ENCODE measurements at regions of chr10 and their contacts with region 1.

Region 1: DNA sequence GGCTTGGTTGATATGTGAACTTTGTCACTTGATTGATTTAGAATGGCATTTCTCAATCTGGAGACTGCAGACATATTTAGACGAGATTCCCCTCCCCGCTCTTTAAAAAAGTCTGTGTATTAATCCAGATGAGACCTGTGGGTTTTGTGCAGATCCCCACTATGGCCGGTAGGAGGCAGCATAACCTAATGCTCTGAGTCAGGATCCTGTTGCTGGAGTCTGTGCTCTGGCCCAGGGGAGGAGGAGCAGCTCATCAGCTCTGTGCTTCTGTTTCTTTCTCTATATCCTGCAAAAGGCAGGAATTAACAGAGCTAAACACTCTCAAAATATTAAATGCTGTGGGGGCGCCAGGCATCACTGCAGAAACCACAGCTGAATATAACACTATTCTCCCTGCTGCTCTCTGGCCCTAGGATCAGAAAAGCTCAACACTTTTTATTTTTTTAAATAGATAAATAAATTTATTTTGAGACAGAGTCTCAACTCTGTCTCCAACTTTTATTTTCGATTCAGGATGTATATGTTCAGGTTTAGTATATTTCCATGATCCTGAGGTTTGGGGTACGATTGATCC is 23.9 kb upstream of the SEPHS1 start:
- DNase-seq: peak; percentile 78
- H3K4me3 Mint-ChIP-seq: no peak overlapping the region
- H3K27ac Mint-ChIP-seq: no peak overlapping the region
- H3K4me1 Mint-ChIP-seq: no peaks in the 10 kb centered on the region
- H3K27me3 Mint-ChIP-seq: no peaks in the 10 kb centered on the region

Region 2: GRCh38 chr10:13382703-13383398 is 10.9 kb after region 1 on chr10:
- CTCF ChIA-PET with region 1: interaction called, 23 read pairs
- POLR2A ChIA-PET with region 1: no interaction called
- intact Hi-C with region 1: no loop called
- DNase-seq: no peak
- H3K4me3 Mint-ChIP-seq: peak overlapping the region; percentile 13
- H3K27ac Mint-ChIP-seq: no peak overlapping the region
- H3K4me1 Mint-ChIP-seq: peaks cover 11% of the 10 kb centered on the region
- H3K27me3 Mint-ChIP-seq: peaks cover 39% of the 10 kb centered on the region

Region 3: DNA sequence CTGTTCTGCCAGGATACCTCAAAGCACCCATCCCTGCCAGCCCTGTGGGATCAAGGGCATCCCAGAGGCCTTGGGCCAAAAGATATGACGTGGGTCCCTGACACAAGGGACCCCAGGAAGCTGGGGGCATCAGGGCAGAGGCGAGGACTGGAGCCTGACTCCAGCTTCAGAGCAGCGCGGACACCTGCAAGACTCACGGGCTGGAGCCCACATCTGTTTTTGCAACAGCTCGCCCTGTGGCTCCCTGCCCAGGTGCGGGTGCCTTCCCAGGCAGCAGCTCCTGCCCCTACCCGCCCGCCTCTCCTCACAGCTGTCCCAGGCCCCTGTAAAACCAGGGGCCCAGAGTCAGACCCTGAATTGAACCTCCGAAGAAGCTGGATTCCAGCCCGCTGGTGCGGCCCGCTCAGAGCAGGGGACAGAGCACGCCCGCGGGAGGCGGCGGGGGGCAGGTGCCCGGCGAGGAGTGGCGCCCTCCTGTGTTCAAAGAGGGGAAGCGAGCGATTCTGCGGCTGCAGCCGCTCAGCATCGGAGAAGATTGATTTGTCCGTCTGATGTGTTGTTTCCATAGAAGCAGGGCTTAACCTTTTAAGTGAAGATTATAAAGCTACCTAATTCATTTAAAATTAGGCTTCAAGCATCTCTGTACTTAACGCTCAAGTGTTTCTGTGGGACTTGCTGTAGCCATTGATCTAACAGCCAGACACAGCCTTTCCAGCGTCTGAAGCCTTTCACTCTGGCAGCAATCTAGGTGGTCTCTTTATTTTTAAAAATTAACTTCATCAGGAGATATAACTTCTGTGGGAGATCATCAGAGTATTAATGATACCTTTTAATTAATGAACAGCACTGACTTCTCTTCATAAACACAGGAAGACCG is 68.4 kb after region 1 on chr10:
- CTCF ChIA-PET with region 1: interaction called, 114 read pairs
- POLR2A ChIA-PET with region 1: no interaction called
- intact Hi-C with region 1: loop called (anchors 1 kb)
- DNase-seq: peak; percentile 76
- H3K4me3 Mint-ChIP-seq: peak overlapping the region; percentile 38
- H3K27ac Mint-ChIP-seq: no peak overlapping the region
- H3K4me1 Mint-ChIP-seq: peaks cover 9% of the 10 kb centered on the region
- H3K27me3 Mint-ChIP-seq: peaks cover 37% of the 10 kb centered on the region

Region 4: GRCh38 chr10:13536674-13537366 is 164.8 kb after region 1 on chr10:
- CTCF ChIA-PET with region 1: interaction called, 17 read pairs
- POLR2A ChIA-PET with region 1: no interaction called
- intact Hi-C with region 1: loop called (anchors 1 kb)
- DNase-seq: peak; percentile 53
- H3K4me3 Mint-ChIP-seq: no peak overlapping the region
- H3K27ac Mint-ChIP-seq: no peak overlapping the region
- H3K4me1 Mint-ChIP-seq: no peaks in the 10 kb centered on the region
- H3K27me3 Mint-ChIP-seq: peaks cover 35% of the 10 kb centered on the region

Region 5: DNA sequence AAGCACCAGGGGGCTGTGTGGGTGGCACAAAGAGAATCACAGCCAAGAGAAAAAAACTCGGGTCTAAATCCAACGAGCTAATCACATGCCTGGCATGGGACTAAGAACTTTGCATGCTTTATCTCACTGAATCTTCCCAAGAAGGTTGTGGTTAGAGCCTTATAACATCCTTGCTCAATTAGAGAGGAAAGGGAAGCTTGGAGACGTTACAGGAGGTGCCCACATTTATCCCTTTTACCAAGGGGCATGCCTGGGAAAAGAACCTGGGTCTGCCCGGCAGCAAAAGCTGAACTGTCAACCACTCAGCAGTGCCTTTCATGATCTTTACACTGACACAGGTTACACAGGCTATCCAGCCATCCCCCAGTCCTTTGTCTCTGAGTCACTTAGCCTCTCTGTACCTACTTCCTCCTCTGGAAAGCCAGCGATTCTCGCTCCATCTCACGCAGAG is 404.9 kb after region 1 on chr10:
- CTCF ChIA-PET with region 1: interaction called, 5 read pairs
- POLR2A ChIA-PET with region 1: no interaction called
- intact Hi-C with region 1: loop called (anchors 1 kb)
- DNase-seq: no peak
- H3K4me3 Mint-ChIP-seq: no peak overlapping the region
- H3K27ac Mint-ChIP-seq: no peak overlapping the region
- H3K4me1 Mint-ChIP-seq: no peaks in the 10 kb centered on the region
- H3K27me3 Mint-ChIP-seq: peaks cover 16% of the 10 kb centered on the region